Activated CD8-positive, alpha-beta T cell treated with anti-CD3 and anti-CD28 coated beads for 36 hours (primary cell): ENCODE measurements at regions of chr6 and their contacts with region 1.

Region 1: GRCh38 chr6:30914076-30914853 is at the start of gene VARS2:
- DNase-seq: peak; percentile 89
- ATAC-seq: peak; percentile 96
- H3K4me3 Mint-ChIP-seq: peak within 1 kb of the TSS; percentile 80
- H3K27ac Mint-ChIP-seq: peak within 1 kb of the TSS; percentile 88
- H3K4me1 Mint-ChIP-seq: peaks cover 29% of the 10 kb centered on the region
- H3K27me3 Mint-ChIP-seq: no peaks in the 10 kb centered on the region
- CTCF ChIP-seq: no peak
- total RNA-seq, gene VARS2: 83.0 to 84.0 TPM

Region 2: GRCh38 chr6:30678964-30679726 is 235.1 kb before region 1 on chr6:
- CTCF ChIA-PET with region 1: interaction called, 10 read pairs
- POLR2A ChIA-PET with region 1: no interaction called
- intact Hi-C with region 1: no loop called
- DNase-seq: peak; percentile 92
- ATAC-seq: peak; percentile 27
- H3K4me3 Mint-ChIP-seq: peak overlapping the region; percentile 88
- H3K27ac Mint-ChIP-seq: peak overlapping the region; percentile 95
- H3K4me1 Mint-ChIP-seq: peaks cover 11% of the 10 kb centered on the region
- H3K27me3 Mint-ChIP-seq: no peaks in the 10 kb centered on the region
- CTCF ChIP-seq: peak; percentile 97

Region 3: DNA sequence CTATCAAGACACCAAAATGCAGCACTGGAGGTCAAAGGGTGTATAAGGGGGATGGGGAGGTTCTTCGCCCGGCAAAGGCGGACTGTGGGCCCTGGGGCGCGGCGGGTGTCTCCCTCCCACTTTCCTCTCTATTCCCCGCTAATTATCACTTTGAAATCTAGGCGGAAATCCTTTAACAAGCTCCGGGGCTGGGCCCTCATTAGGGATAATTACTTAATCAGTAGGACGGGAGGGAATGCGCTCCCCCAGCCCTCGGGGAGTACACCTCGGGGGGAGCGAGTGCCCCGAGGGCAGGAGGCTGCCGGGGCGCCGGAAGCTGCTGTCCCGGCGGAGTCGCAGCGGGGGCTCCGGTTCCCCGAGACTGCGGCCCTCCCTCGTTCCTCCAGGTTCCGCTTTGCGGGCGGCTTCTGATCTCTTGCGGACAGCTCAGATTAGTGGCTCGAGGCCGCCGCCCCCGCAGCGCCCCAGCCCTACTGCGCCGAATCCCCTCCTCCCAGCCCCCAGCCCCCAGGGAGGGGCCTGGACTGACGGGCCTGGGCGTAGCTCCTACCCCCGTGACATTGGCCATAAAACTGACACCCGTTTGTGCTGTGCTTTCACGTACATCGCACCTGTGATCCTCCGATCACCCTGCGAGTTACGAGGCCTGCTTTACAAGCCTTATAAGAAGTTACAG is 41.2 kb after region 1 on chr6:
- CTCF ChIA-PET with region 1: interaction called, 4 read pairs
- POLR2A ChIA-PET with region 1: interaction called, 12 read pairs
- intact Hi-C with region 1: no loop called
- DNase-seq: peak; percentile 88
- ATAC-seq: peak; percentile 90
- H3K4me3 Mint-ChIP-seq: peak overlapping the region; percentile 76
- H3K27ac Mint-ChIP-seq: peak overlapping the region; percentile 58
- H3K4me1 Mint-ChIP-seq: peaks cover 22% of the 10 kb centered on the region
- H3K27me3 Mint-ChIP-seq: peaks cover 33% of the 10 kb centered on the region
- CTCF ChIP-seq: no peak

Region 4: DNA sequence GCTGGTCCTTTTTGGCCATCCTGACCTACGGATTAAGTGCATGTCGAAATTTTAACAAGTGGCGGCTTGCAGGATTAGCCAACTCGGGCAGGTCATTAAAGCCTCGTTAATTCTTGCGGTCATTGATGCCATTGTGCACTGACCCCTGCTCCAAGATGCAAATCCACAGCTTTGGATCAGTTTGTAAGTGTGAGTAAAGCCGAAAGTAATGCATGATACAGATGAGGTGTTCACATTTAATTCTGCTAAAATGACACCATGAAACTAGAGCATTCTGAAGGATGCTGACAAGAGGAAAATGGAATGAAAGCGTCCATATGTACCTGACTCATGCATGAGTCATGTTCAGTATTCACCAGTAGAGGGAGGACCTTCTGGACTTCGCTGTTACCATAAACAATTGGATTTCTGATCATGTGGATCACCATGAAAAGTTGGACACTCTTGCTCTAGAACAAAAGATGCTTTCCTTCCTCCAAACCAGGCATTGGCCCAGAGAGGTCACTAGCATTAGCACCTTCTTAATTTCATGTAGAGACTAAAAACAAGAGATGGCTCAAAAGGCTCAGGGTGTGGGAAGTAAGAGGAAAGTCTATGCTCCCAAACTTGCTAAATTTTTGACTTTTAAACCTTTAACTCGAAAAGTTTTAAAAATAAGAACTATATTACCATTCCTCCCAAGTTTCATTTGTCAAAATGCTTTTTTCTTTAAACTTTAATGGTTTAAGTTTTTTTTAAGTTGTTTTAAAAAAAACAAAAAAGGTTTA is 144.0 kb after region 1 on chr6:
- CTCF ChIA-PET with region 1: interaction called, 15 read pairs
- POLR2A ChIA-PET with region 1: interaction called, 3 read pairs
- intact Hi-C with region 1: no loop called
- DNase-seq: no peak
- ATAC-seq: peak; percentile 67
- H3K4me3 Mint-ChIP-seq: no peak overlapping the region
- H3K27ac Mint-ChIP-seq: no peak overlapping the region
- H3K4me1 Mint-ChIP-seq: peaks cover 5% of the 10 kb centered on the region
- H3K27me3 Mint-ChIP-seq: peaks cover 8% of the 10 kb centered on the region
- CTCF ChIP-seq: peak; percentile 30

Region 5: GRCh38 chr6:31068669-31069340 is 154.5 kb after region 1 on chr6:
- CTCF ChIA-PET with region 1: interaction called, 45 read pairs
- POLR2A ChIA-PET with region 1: no interaction called
- intact Hi-C with region 1: no loop called
- DNase-seq: peak; percentile 75
- ATAC-seq: peak; percentile 96
- H3K4me3 Mint-ChIP-seq: no peak overlapping the region
- H3K27ac Mint-ChIP-seq: no peak overlapping the region
- H3K4me1 Mint-ChIP-seq: peaks cover 1% of the 10 kb centered on the region
- H3K27me3 Mint-ChIP-seq: no peaks in the 10 kb centered on the region
- CTCF ChIP-seq: peak; percentile 89

Region 6: GRCh38 chr6:31609519-31610406 is 695.5 kb after region 1 on chr6:
- CTCF ChIA-PET with region 1: no interaction called
- POLR2A ChIA-PET with region 1: no interaction called
- intact Hi-C with region 1: no loop called
- DNase-seq: no peak
- ATAC-seq: no peak
- H3K4me3 Mint-ChIP-seq: no peak overlapping the region
- H3K27ac Mint-ChIP-seq: no peak overlapping the region
- H3K4me1 Mint-ChIP-seq: peaks cover 8% of the 10 kb centered on the region
- H3K27me3 Mint-ChIP-seq: no peaks in the 10 kb centered on the region
- CTCF ChIP-seq: no peak